PC-9 (cell line): ENCODE measurements at regions of chr12 and their contacts with region 1.

Region 1: DNA sequence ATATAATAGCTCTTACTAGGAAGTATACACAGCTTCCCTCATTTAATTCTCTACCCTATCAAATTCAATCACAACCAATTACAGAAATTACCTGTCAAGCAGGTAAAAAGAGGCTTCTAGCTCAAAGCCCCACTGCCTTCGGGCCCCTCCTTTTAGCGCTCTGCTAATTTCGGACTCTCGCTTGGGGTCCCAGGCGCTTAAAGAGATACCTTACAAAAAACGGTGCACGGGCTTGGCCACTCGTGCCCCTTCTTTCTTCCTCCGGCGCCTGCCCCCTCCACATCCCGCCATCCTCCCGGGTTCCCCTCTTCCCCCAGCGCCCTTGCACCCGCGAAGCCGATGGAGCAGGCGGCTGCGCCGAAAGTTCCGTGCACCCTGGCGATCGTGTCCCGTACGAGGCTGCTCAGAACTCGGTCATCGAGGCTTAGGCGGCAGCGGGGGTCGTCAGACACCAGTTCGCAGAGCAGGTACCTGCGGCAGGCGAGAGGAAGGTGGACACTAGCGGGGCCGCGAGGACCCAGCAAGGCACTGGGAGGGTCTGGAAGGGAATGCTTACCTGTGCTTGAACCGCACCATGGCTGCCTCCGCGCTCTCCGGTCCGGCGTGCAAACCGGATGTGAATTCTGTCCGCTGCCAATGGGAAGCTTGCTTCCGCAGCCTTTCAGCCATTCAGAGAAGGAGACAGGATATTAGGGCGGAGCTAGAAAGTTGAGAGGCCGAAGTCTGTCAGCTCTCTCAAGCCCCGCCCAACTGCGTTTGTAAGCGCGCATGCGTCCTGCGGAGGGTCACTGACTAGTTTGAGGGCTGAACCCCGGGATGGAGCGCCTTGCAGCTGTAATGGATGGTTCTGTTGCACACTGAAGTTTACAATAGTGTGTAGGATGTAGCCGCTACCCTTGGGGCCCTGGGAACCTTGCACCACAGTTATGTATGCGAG is at the start of gene POP5:
- DNase-seq: peak; percentile 94 to 96
- H3K4me3 ChIP-seq: peak within 1 kb of the TSS; percentile 98
- H3K27ac ChIP-seq: no peak within 1 kb of the TSS
- H3K4me1 ChIP-seq: 0 out of 2 replicates have a peak, but pooled peaks cover 19% of the 10 kb centered on the region
- H3K27me3 ChIP-seq: no peaks in the 10 kb centered on the region
- CTCF ChIP-seq: no peak
- total RNA-seq, gene POP5: 26.5 and 30.5 TPM in 2 replicates

Region 2: GRCh38 chr12:120327593-120327992 is 253.5 kb before region 1 on chr12 and contains the start of gene PLA2G1B:
- CTCF ChIA-PET with region 1: no interaction called
- POLR2A ChIA-PET with region 1: no interaction called
- intact Hi-C with region 1: loop called (anchors 2 kb)
- DNase-seq: no peak
- H3K4me3 ChIP-seq: no peak within 1 kb of the TSS
- H3K27ac ChIP-seq: no peak within 1 kb of the TSS
- H3K4me1 ChIP-seq: no peaks in the 10 kb centered on the region
- H3K27me3 ChIP-seq: 0 out of 2 replicates have a peak, but pooled peaks cover 4% of the 10 kb centered on the region
- CTCF ChIP-seq: no peak
- total RNA-seq, gene PLA2G1B: not detected in 2 replicates

Region 3: DNA sequence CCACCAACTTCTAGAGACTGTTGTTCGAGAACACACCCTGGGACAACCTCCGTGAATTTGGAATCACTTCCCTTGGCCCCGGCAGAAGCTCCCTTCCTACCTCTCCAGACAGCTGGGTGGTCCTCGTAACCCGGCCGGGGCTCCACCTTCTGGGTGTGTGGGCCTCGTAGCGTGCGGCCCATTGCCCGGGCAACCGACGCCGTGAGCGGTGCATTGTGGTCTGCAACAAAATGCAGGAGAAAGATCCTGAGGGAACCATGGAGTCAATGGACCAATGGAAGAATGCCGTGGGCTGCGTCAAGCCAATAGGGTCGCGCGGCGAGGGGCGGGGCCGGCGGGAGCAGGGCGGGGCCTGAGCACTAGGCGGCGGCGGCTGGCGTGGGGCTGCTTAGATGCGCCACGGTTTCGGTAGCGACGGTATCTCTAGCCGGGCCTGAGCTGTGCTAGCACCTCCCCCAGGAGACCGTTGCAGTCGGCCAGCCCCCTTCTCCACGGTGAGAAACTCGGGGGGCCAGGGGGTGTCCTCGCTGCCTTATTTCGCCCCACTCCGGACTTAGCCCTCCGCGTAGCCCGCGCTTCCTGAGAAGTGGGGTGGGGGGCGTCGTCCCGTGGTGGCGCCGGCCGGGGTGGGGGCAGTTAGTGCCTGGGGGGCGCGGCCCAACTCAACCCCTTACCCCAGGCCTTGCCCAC is 85.2 kb before region 1 on chr12 and contains the start of gene DYNLL1:
- CTCF ChIA-PET with region 1: no interaction called
- POLR2A ChIA-PET with region 1: interaction called, 15 read pairs
- intact Hi-C with region 1: no loop called
- DNase-seq: peak; percentile 87 to 98
- H3K4me3 ChIP-seq: peak within 1 kb of the TSS; percentile 91
- H3K27ac ChIP-seq: peak within 1 kb of the TSS; percentile 21; the same call in 1 of the 2 replicates
- H3K4me1 ChIP-seq: peaks cover 23% of the 10 kb centered on the region
- H3K27me3 ChIP-seq: no peaks in the 10 kb centered on the region
- CTCF ChIP-seq: no peak
- total RNA-seq, gene DYNLL1: 251 and 340 TPM in 2 replicates

Region 4: GRCh38 chr12:120710031-120710804 is 129.2 kb after region 1 on chr12 and contains the start of gene UNC119B:
- CTCF ChIA-PET with region 1: no interaction called
- POLR2A ChIA-PET with region 1: no interaction called
- intact Hi-C with region 1: loop called (anchors 1 kb)
- DNase-seq: peak in 1 of 2 experiments; percentile 63
- H3K4me3 ChIP-seq: peak within 1 kb of the TSS; percentile 87
- H3K27ac ChIP-seq: no peak within 1 kb of the TSS; the same call in 1 of the 2 replicates
- H3K4me1 ChIP-seq: peaks cover 7% of the 10 kb centered on the region; the same call in 1 of the 2 replicates
- H3K27me3 ChIP-seq: no peaks in the 10 kb centered on the region
- CTCF ChIP-seq: no peak
- total RNA-seq, gene UNC119B: 25.9 and 30.2 TPM in 2 replicates

Region 5: DNA sequence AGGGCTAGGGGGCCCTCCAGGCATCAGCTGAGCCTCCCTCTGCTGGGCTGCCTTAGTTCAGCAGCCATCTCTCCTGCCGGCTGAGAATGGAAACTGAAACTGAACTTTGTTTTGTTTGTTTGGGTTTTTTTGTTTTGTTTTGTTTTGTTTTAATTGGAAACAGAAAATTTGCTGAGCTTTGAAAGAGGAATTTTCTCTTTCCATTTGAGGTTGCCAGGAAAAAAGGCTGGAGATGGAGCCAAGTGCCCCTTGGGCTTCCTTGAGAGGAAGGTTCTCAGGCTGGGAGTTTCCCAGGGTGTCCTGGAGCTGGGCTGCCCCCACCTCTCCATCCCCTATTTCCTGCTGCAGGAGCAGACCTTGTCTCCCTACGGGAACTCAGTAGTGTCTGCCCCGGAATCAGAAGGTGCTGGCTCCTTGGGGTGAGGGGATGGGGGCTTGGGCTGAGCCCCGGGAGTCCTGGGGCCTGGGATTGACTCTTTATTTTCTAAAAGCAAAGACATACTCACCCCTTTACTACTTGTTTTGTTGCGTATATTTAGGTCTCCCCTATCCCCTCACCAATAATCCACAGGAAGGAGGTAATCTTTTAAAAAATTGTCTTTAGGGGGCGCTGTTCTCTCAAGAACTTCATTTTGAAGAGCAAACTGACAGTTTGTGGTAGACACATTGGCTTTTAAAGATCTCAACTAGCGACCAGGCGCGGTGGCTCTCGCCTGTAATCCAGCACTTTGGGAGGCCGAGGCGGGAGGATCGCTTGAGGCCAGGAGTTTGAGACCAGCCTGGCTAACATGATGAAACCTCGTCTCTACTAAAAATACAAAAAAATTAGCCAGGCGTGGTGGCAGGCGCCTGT is 479.3 kb after region 1 on chr12:
- CTCF ChIA-PET with region 1: no interaction called
- POLR2A ChIA-PET with region 1: no interaction called
- intact Hi-C with region 1: loop called (anchors 1 kb)
- DNase-seq: peak in 1 of 2 experiments; percentile 54
- H3K4me3 ChIP-seq: no peak overlapping the region; the same call in 1 of the 2 replicates
- H3K27ac ChIP-seq: no peak overlapping the region
- H3K4me1 ChIP-seq: 0 out of 2 replicates have a peak, but pooled peaks cover 3% of the 10 kb centered on the region
- H3K27me3 ChIP-seq: no peaks in the 10 kb centered on the region
- CTCF ChIP-seq: peak; percentile 75

Region 6: DNA sequence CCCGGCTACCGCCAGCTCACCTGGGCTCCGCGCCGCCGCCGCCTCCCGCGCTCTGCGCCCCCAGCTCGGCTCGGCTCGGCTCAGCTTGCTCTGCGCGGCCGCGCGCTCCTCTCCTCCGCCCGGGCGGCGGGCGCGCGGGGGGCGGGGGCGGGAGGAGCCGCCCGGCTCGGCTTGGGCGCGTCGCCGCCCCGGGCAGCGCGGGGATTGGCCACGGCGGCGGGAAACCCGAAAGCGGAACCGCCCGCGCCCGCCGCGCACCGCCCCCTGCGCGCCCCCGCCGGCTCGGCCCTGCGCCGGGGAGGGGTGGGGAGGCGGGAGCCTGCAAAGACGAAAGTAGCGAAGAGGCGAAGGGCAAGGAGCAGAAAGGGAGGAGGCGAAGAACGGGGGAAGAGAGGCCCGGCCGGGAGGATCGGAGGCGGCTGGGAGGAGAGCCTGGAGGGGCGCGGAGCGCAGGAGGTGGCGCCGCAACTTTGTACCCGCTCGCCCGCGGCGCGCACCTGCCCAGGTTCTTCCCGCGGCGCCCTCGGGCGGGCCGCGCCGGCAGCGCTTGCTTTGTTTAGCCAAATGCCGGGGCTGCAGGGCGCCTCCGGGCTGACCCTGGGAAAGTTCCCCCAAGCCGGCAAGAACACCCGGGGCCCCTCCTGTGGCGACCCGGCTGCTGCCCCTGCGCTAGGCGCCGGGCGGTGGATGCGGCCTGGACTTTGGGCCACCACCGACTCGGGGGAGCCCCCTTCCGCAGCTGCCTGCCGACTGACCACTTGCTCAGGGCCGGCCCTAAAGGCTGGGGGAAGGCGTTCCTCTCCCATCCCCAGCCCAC is 715.8 kb after region 1 on chr12 and contains the start of gene CAMKK2:
- CTCF ChIA-PET with region 1: no interaction called
- POLR2A ChIA-PET with region 1: interaction called, 13 read pairs
- intact Hi-C with region 1: no loop called
- DNase-seq: peak; percentile 44 to 90
- H3K4me3 ChIP-seq: peak within 1 kb of the TSS; percentile 95
- H3K27ac ChIP-seq: peak within 1 kb of the TSS; percentile 12; the same call in 1 of the 2 replicates
- H3K4me1 ChIP-seq: peaks cover 6% of the 10 kb centered on the region
- H3K27me3 ChIP-seq: no peaks in the 10 kb centered on the region
- CTCF ChIP-seq: no peak; the same call in 1 of the 2 replicates
- total RNA-seq, gene CAMKK2: 26.7 and 37.6 TPM in 2 replicates